Right cardiac atrium (tissue), 5 donors: ENCODE measurements at regions of chr11 and their contacts with region 1.

Region 1: GRCh38 chr11:106021967-106022794 is at the start of gene MSANTD4:
- DNase-seq: peak; percentile 99 to 100 (median 100)
- ATAC-seq: peak; percentile 100
- H3K4me3 ChIP-seq: peak within 1 kb of the TSS; percentile 88
- H3K27ac ChIP-seq: peak within 1 kb of the TSS; percentile 86
- H3K4me1 ChIP-seq: no peaks in the 10 kb centered on the region
- H3K27me3 ChIP-seq: no peaks in the 10 kb centered on the region
- total RNA-seq, gene MSANTD4: 17.9 to 23.8 (median 19.5) TPM

Region 2: GRCh38 chr11:106076919-106077608 is 54.9 kb after region 1 on chr11 and contains the start of gene KBTBD3:
- intact Hi-C with region 1: loop called in 2 of 4 experiments (anchors 2 to 5 kb)
- DNase-seq: peak; percentile 99
- ATAC-seq: peak; percentile 99
- H3K4me3 ChIP-seq: peak within 1 kb of the TSS; percentile 90
- H3K27ac ChIP-seq: peak within 1 kb of the TSS; percentile 98
- H3K4me1 ChIP-seq: peaks cover 2% of the 10 kb centered on the region
- H3K27me3 ChIP-seq: no peaks in the 10 kb centered on the region
- total RNA-seq, gene KBTBD3: 7.9 to 14.4 (median 12.9) TPM

Region 3: DNA sequence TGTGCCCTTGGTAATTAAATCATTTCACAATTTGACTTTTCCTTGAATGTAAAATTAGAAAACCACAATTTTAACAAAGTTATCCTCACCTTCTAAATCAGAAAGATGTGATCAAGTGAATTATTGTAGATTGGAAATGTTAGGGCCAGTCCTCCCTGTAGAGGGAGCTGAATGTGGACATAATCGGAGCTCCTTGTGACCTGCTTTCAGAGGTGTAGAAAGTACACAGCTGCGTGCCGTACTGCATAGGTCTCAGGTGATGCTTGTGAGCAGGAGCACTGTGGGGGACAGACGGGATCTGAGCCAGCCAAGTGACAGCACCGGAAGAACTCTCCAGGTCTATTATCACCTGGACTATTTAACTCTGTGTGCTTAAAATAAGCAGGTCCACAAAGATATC is 393.3 kb after region 1 on chr11:
- intact Hi-C with region 1: no loop called
- DNase-seq: no peak
- ATAC-seq: no peak
- H3K4me3 ChIP-seq: no peak overlapping the region
- H3K27ac ChIP-seq: no peak overlapping the region
- H3K4me1 ChIP-seq: no peaks in the 10 kb centered on the region
- H3K27me3 ChIP-seq: no peaks in the 10 kb centered on the region